Stomach (tissue), 19 donors: ENCODE measurements at regions of chr1 and their contacts with region 1.

Region 1: DNA sequence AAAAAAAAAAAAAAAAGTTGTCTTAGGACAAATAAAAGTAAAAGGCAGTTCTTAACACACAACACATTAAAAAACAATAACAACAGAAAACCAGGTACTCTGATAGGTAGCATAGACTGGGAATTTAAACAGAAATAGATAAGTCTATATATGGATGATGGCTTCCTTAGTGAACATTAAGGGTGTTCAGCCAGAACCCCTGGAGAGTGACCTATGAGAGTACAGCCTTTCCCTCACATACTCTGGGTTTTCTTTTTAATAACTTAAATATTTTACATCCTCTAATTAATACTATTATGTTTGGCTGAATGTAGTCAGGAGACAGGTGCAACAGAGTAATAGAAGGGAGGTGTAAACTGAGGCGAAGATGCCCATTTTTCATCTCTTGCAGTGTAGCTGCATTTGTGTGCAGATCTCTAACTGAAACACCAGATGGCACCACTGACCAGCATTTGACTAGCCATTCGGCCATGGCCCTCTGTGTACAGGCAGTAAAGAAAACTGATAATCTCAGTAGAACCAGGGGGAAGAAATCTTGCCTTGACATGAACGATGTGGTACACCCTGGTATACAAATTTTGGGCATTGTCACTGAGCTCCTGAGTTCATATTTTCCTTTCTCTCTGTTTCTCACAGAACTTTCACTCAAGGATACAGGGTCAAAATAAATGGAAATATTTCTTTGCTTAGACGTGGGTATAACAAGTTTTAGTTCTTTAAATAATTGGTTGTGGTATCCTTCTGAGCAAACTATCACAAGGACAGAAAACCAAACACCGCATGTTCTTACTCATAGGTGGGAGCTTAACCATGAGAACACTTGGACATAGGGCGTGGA is 7.6 kb downstream of the TTF2 start:
- DNase-seq: peak; percentile 65 to 85
- H3K4me3 ChIP-seq: no peak overlapping the region
- H3K27ac ChIP-seq: no peak overlapping the region
- H3K4me1 ChIP-seq: peaks cover 0 to 4% (median 0%) of the 10 kb centered on the region in 4 donors
- H3K27me3 ChIP-seq: no peaks in the 10 kb centered on the region
- CTCF ChIP-seq: peak in 5 of 7 experiments; percentile 60 to 80 (median 70)
- EP300 ChIP-seq: no peak
- POLR2A ChIP-seq: no peak

Region 2: GRCh38 chr1:117128323-117129079 is 60.7 kb after region 1 on chr1:
- intact Hi-C with region 1: loop called (anchors 5 kb)
- DNase-seq: peak in 1 of 2 donors; percentile 69
- H3K4me3 ChIP-seq: no peak overlapping the region
- H3K27ac ChIP-seq: peak overlapping the region in 1 of 5 donors; percentile 41
- H3K4me1 ChIP-seq: peaks cover 0 to 12% (median 11%) of the 10 kb centered on the region in 4 donors
- H3K27me3 ChIP-seq: no peaks in the 10 kb centered on the region
- CTCF ChIP-seq: peak in 4 of 7 experiments; percentile 15 to 53 (median 44)
- EP300 ChIP-seq: no peak
- POLR2A ChIP-seq: no peak

Region 3: GRCh38 chr1:117284399-117285215 is 216.9 kb after region 1 on chr1:
- intact Hi-C with region 1: loop called (anchors 5 kb)
- DNase-seq: peak in 1 of 2 donors; percentile 87
- H3K4me3 ChIP-seq: no peak overlapping the region
- H3K27ac ChIP-seq: no peak overlapping the region
- H3K4me1 ChIP-seq: no peaks in the 10 kb centered on the region
- H3K27me3 ChIP-seq: no peaks in the 10 kb centered on the region
- CTCF ChIP-seq: peak in 5 of 7 experiments; percentile 19 to 82 (median 56)
- EP300 ChIP-seq: no peak
- POLR2A ChIP-seq: no peak